ENCODE measurements at regions of chr2 and their contacts with region 1.

Region 1: DNA sequence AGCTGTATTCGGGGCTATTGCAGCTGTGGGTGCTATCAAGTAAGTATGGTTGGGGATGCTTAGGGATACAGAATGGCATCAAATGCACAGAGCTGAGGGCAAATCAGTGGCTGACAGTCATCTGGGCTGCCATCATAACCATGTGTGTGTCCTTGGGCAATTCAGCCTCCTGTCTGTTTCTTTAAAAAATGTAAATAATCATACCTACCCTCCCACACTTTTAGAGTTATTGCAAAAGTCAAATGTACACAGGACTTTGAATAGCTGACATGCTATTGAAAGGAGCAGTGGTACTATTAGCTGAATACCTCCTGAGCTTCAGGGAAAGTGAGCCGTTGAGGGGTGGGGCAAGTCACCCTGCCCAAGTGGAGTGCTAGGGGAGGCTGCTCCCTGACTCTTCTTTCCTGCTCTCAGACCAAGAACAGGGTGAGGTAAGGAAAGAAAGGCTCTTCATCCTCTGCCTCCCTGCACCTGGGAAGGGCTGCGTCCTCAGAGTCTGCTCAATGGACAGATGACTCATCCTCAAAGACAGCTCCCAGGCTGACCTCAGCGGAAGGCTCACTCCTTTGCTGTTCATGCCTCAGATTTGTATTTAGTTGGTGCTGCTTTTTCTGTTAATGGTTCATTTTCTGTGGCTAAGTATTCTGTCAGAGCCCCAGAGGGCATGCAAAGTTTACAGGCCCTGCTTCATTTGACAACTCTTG is 54.9 kb upstream of the BZW1 start:
- H3K4me3 ChIP-seq: no peak overlapping the region
- H3K27ac ChIP-seq: no peak overlapping the region
- H3K4me1 ChIP-seq: no peaks in the 10 kb centered on the region
- CTCF ChIP-seq: no peak

Region 2: DNA sequence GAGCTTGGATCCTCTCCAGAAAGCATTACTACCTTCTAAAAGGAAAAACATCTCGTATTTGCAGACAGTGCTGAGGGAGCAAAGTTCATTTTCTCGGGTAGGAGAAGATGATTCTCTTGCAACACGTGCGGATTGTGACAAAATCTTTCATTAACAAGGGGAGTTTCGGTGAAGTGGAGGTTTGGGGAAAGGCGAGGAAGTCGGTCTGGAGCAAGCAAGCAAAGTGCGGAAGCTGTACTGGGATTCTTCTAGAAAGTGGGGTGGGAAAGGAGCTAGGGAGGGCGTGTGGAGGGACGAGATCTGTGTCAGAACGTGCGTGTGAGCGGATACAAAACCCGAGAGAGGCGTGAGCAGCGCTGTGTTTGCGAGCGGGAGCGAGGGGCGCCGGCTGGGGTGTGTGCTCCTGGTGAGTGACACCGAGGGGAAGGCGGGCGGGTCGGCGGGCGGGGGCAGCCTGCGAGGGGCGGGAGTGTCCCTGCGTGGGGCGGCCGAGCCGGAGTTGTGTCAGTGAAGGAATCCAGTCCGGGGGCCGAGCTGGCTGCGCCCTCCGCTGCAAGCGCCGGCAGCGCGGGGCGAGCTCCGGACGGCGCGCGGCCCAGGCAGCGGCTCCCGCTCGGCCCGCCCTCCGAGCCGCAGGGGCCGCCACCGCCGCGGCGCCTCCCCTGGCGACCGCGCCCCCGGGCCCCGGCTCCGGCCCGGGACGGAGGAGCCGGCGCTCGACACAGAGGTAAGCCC is 450.4 kb before region 1 on chr2 and contains the start of gene SPATS2L:
- CTCF ChIA-PET with region 1: no interaction called
- POLR2A ChIA-PET with region 1: no interaction called
- H3K4me3 ChIP-seq: peak within 1 kb of the TSS; percentile 86
- H3K27ac ChIP-seq: peak within 1 kb of the TSS; percentile 87
- H3K4me1 ChIP-seq: peaks cover 11% of the 10 kb centered on the region; the same call in 1 of the 2 replicates
- CTCF ChIP-seq: peak; percentile 30; the same call in 1 of the 2 replicates

Region 3: GRCh38 chr2:200609027-200609614 is 147.6 kb before region 1 on chr2:
- CTCF ChIA-PET with region 1: no interaction called
- POLR2A ChIA-PET with region 1: no interaction called
- H3K4me3 ChIP-seq: no peak overlapping the region
- H3K27ac ChIP-seq: no peak overlapping the region
- H3K4me1 ChIP-seq: no peaks in the 10 kb centered on the region
- CTCF ChIP-seq: no peak

Region 4: GRCh38 chr2:200811336-200812121 is 54.8 kb after region 1 on chr2 and contains the start of gene BZW1:
- CTCF ChIA-PET with region 1: no interaction called
- POLR2A ChIA-PET with region 1: interaction called, 10 read pairs
- H3K4me3 ChIP-seq: peak within 1 kb of the TSS; percentile 91
- H3K27ac ChIP-seq: peak within 1 kb of the TSS; percentile 92
- H3K4me1 ChIP-seq: no peaks in the 10 kb centered on the region
- CTCF ChIP-seq: no peak

Measured in HEK293 (cell line).